ENCODE measurements at regions of chrX and their contacts with region 1.

Region 1: GRCh38 chrX:125709074-125709473 is 389.4 kb downstream of the TEX13C start:
- DNase-seq: no peak
- H3K4me3 ChIP-seq: no peak overlapping the region
- H3K27ac ChIP-seq: no peak overlapping the region
- H3K4me1 ChIP-seq: no peaks in the 10 kb centered on the region
- H3K27me3 ChIP-seq: peaks cover 0 to 7% of the 10 kb centered on the region in 2 donors
- CTCF ChIP-seq: no peak
- POLR2A ChIP-seq: no peak

Region 2: DNA sequence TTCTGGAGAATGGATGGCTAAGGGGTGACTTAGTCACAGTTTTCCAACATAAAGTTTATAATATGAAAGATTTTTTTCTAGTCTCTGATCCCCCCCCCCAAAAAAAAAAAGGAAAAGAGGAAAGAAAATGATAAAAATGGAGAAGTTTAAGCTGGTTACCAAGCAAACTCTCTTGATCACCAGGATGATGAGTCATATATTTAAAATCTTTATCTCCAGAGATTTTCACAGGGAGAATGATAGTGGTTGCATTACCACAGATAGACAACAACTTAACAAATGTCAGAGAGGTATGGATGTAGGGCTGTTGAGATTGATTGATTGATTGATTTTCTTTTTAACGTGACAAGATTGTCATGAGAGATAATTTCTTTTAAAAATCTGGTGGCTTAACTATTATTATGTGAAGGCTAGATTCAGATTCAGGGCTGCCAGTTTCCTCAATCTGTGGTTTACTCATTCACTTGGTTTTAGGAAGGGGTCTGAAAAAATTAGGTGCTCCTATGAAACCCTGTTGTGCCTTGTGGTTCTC is 402.7 kb before region 1 on chrX:
- intact Hi-C with region 1: loop called (anchors 5 kb)
- DNase-seq: no peak
- H3K4me3 ChIP-seq: no peak overlapping the region
- H3K27ac ChIP-seq: no peak overlapping the region
- H3K4me1 ChIP-seq: no peaks in the 10 kb centered on the region
- H3K27me3 ChIP-seq: peaks cover 0 to 3% of the 10 kb centered on the region in 2 donors
- CTCF ChIP-seq: no peak
- POLR2A ChIP-seq: no peak

Region 3: DNA sequence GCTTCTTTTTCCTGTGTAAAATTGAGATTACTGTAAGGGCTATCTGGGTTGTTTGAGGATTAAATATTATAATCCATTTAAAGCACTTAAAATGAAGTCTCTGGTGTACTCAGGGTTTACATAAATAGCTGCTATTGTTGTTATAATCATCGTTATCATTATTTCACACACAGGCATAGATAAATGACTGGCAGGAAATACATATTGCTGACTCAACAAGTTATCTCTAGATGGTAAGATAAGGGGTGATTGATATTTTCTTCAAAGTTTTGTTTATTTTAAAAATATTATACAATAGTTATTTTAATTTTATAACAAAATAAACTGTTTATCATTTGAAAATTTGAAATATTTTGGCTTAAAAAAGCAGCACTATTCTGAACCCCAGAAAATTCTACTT is 591.3 kb after region 1 on chrX:
- intact Hi-C with region 1: loop called (anchors 10 kb)
- DNase-seq: no peak
- H3K4me3 ChIP-seq: no peak overlapping the region
- H3K27ac ChIP-seq: no peak overlapping the region
- H3K4me1 ChIP-seq: no peaks in the 10 kb centered on the region
- H3K27me3 ChIP-seq: no peaks in the 10 kb centered on the region
- CTCF ChIP-seq: no peak
- POLR2A ChIP-seq: no peak

Measured in breast epithelium (tissue), 4 donors.